ENCODE measurements at regions of chr1 and their contacts with region 1.

Region 1: DNA sequence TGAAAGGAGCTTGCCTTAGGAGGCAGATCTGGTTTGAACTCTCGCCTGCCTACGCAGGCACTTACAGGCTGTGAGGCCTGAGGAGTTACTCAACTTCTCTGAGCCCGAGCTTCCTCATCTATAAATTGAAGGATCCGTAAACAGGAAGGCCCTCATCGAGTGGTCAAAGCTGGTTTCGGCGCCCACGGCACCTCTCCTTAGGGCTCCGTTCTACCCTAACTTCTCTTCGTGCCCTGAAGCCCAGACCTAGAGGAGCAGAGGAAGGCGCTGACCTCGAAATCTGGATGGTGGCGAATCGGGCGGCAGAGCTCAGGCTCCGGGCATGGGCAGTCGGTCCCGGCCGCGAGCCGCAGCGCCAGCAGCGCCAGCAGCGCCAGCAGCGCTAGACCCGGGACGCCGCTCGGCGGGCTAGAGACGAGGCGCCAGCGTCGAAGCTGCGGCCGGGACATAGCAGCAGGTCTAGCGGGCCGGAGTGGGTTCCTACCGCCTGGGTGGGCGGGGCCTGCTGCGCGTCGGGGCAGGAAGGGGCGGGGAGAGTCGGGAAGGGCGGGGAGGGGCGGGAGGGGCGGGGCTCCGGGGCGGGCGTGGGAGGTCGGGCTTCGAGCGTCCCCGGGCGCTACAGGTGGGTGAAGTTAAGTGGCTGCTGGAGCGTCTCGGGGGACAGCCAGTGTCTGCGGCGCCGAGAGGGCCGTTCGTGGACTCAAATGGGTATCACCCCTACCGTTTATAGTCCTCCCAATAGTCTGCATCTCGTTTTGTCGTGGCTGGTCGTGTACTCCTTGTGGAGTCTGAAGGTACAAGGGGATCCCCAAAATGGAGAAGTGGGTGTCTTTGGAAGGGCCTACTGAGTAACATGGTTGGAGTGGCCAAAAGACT is at the start of gene CTBS:
- DNase-seq: peak; percentile 92
- H3K4me3 ChIP-seq: peak within 1 kb of the TSS; percentile 50
- H3K27ac ChIP-seq: peak within 1 kb of the TSS; percentile 100
- H3K4me1 ChIP-seq: no peaks in the 10 kb centered on the region
- H3K27me3 ChIP-seq: no peaks in the 10 kb centered on the region
- CTCF ChIP-seq: no peak
- total RNA-seq, gene CTBS: 13.6 to 22.7 TPM

Region 2: DNA sequence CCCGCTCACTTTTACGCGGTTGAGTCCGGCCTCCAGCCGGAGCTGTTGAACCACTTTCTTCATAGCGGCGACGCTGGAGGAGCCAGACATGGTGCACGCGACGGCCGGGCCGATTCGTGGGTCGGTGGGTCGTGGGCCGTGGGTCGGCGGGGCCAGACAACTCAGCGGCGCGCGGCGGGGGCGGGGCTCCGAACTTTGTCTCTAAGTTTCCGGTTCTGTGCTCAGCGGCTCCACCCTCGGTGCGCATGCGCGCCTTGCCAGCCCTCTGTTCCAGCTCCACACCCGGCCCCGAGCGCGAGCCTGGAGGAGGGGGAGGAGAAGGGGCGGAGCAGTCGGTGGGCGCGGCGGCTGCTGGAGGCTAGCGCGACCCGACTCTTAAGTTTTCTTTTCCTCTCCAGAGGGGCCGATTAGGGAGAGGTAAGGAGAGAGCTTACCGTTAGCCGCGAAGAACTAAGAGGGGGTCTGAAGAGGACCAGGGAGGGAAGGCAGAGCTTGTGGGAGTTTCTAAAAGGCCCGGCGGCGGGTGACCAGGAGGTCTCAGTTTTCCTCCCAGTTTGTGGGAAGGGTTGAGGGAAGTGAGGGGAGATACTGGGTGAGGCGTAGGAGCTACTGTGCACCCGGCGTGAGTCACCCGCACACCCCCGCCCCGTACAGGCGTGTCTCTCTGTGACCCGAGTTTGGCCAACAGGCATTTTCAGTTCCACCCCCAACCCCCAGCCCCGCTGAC is 68.0 kb before region 1 on chr1 and contains the starts of genes GNG5 and SPATA1:
- intact Hi-C with region 1: loop called (anchors 5 kb)
- DNase-seq: peak; percentile 99
- H3K4me3 ChIP-seq: peak within 1 kb of the TSS; percentile 70
- H3K27ac ChIP-seq: peak within 1 kb of the TSS; percentile 95
- H3K4me1 ChIP-seq: peaks cover 4% of the 10 kb centered on the region
- H3K27me3 ChIP-seq: no peaks in the 10 kb centered on the region
- CTCF ChIP-seq: no peak
- total RNA-seq, gene GNG5: 148 to 160 TPM
- total RNA-seq, gene SPATA1: 1.3 to 2.7 TPM

Measured in colonic mucosa (tissue), 4 donors.